AG04449 (cell line): ENCODE measurements at regions of chr12 and their contacts with region 1.

Region 1: GRCh38 chr12:55619354-55620138 is 17.1 kb upstream of the OR10P1 start:
- DNase-seq: peak; percentile 78
- H3K4me3 ChIP-seq: no peak overlapping the region
- CTCF ChIP-seq: peak; percentile 38

Region 2: GRCh38 chr12:55188974-55189556 is 430.5 kb before region 1 on chr12:
- CTCF ChIA-PET with region 1: interaction called, 107 read pairs
- POLR2A ChIA-PET with region 1: no interaction called
- DNase-seq: peak; percentile 26
- H3K4me3 ChIP-seq: no peak overlapping the region
- CTCF ChIP-seq: peak; percentile 53

Region 3: GRCh38 chr12:55194382-55194781 is 425.2 kb before region 1 on chr12:
- CTCF ChIA-PET with region 1: interaction called, 107 read pairs
- POLR2A ChIA-PET with region 1: no interaction called
- DNase-seq: no peak
- H3K4me3 ChIP-seq: no peak overlapping the region
- CTCF ChIP-seq: no peak

Region 4: GRCh38 chr12:55654511-55655214 is 35.1 kb after region 1 on chr12:
- CTCF ChIA-PET with region 1: interaction called, 14 read pairs
- POLR2A ChIA-PET with region 1: no interaction called
- DNase-seq: no peak
- H3K4me3 ChIP-seq: no peak overlapping the region
- CTCF ChIP-seq: no peak

Region 5: DNA sequence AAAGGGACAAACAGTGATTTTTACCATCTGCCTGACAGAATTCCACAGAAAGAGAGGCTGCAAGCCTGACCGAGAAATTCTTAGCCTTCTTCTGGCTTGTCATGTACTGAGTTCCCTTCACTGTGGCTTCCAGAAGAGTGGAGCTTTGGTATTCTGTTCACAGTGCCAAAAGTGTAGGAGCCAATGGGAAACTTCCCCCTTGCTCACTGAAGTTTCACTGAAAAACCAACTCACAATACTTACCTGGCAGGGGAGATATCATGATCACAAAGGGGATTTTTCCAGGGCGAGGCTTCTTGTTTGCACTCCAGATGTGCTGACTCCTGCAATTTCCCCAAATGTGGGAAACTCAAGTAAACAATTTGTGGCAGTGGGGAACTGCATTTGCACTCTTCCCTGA is 254.9 kb after region 1 on chr12:
- CTCF ChIA-PET with region 1: no interaction called
- POLR2A ChIA-PET with region 1: no interaction called
- DNase-seq: no peak
- H3K4me3 ChIP-seq: no peak overlapping the region
- CTCF ChIP-seq: no peak